Dorsolateral prefrontal cortex (tissue), 120 donors: ENCODE measurements at regions of chr5 and their contacts with region 1.

Region 1: GRCh38 chr5:10528056-10528816 is 35.6 kb upstream of the ANKRD33B start:
- DNase-seq: peak in 1 of 10 donors; percentile 23
- H3K4me3 ChIP-seq: no peak overlapping the region
- H3K27ac ChIP-seq: peak overlapping the region in 1 of 59 donors; percentile 24
- H3K27me3 ChIP-seq: no peaks in the 10 kb centered on the region
- CTCF ChIP-seq: no peak

Region 2: GRCh38 chr5:10601246-10602030 is 73.2 kb after region 1 on chr5:
- intact Hi-C with region 1: loop called in 1 of 2 experiments (anchors 5 kb)
- DNase-seq: peak; percentile 75 to 90 (median 84)
- H3K4me3 ChIP-seq: peak overlapping the region in 49 of 59 donors; percentile 1 to 56 (median 28)
- H3K27ac ChIP-seq: peak overlapping the region; percentile 29 to 94 (median 87)
- H3K27me3 ChIP-seq: no peaks in the 10 kb centered on the region
- CTCF ChIP-seq: peak in 10 of 56 donors; percentile 6 to 25 (median 10)

Region 3: GRCh38 chr5:10627160-10627701 is 99.0 kb after region 1 on chr5:
- intact Hi-C with region 1: loop called in 1 of 2 experiments (anchors 10 kb)
- DNase-seq: no peak
- H3K4me3 ChIP-seq: peak overlapping the region; percentile 2 to 70 (median 47)
- H3K27ac ChIP-seq: peak overlapping the region in 56 of 59 donors; percentile 17 to 88 (median 74)
- H3K27me3 ChIP-seq: no peaks in the 10 kb centered on the region
- CTCF ChIP-seq: no peak

Region 4: DNA sequence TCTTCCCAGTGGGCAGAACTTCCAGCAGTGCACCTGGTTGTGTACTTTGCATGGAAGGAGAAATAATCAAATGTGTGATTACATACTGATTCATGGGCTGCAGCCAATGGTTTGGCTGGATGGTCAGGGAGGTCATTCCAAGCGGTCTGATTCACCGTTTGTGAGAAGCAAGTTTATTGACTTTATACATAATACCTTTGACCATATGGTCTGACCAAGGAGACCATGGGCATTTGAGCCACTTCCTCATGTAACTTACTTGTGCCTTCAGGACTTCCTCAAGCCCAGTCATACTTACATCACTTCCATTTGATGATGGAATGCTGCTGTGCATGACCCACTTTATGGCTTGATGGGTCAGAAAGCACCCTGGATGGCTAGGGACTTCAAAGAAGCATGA is 191.7 kb after region 1 on chr5:
- intact Hi-C with region 1: no loop called
- DNase-seq: no peak
- H3K4me3 ChIP-seq: no peak overlapping the region
- H3K27ac ChIP-seq: no peak overlapping the region
- H3K27me3 ChIP-seq: no peaks in the 10 kb centered on the region
- CTCF ChIP-seq: no peak